ENCODE measurements at regions of chr6 and their contacts with region 1.

Region 1: DNA sequence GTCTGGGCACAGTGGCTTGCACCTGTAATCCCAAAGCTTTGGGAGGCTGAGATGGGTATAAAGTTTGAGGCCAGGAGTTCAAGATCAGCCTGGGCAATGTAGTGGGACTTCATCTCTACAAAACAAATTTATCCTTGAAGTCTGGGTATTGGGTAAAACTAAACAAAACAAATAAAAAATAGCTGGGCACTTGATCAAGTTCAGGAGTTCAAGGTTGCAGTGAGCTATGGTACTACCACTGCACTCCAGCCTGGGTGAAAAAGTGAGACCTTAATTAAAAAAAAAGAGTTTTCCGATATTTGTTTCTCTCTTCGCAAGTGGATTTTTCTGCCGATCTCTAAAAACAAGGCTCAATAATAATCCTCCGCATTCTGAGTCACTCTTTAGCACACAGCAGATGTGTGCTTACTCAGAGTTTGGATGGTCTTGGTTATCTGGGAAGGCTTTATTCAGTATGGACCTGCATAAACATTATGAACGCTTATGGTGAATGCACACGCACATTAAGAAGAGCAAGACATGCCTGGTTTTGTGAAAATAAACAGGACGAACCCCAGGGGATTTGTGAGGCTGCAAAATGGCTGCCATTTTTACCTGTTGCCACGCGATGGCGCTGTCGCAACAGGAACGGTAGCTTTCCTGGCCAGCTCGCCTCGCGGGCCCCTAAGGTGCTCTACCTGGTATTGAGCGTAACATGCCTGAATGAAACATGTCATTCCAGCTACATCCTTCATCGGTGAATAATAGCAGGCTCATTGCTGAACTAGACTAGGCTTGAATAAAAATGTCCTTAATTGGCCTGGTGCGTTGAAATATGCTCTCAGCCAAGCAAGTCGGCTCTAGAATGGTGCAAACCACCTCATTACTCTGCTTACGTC is 6.0 kb downstream of the OPN5 start:
- DNase-seq: no peak
- ATAC-seq: peak; percentile 96
- H3K4me3 ChIP-seq: no peak overlapping the region
- H3K27ac ChIP-seq: no peak overlapping the region
- H3K4me1 ChIP-seq: no peaks in the 10 kb centered on the region
- H3K27me3 ChIP-seq: peaks cover 0 to 2% of the 10 kb centered on the region in 2 experiments; a peak in 1 of 4 replicates
- CTCF ChIP-seq: peak; percentile 88 to 94 (median 93); a peak in 5 of 6 replicates
- EP300 ChIP-seq: no peak
- POLR2A ChIP-seq: no peak
- RAD21 ChIP-seq: peak; percentile 92

Region 2: DNA sequence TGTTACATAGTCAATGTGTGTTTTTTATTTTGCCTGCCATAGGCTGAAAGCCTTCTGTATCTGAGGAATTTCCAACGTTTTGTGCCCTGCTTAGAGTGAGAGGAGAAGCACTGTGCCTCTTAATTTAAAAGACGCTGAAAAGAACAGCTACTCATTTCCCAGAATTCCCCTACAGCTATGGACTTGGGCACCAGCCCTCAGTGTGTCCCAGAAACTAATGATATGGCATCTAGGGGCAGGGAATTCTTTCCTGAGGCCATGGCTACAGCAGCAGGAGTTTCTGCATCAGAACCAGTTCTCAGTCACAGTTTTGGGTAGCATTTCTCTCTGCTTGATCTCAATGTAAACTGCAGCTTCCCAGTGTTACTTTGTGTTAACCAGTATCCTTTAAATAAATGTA is 14.1 kb after region 1 on chr6:
- CTCF ChIA-PET with region 1: interaction called, 15 read pairs
- POLR2A ChIA-PET with region 1: no interaction called
- RAD21 ChIA-PET with region 1: interaction called, 3 read pairs
- SMC1A ChIA-PET with region 1: interaction called, 12 read pairs
- in situ Hi-C with region 1: no loop called
- intact Hi-C with region 1: no loop called
- DNase-seq: no peak
- ATAC-seq: no peak
- H3K4me3 ChIP-seq: no peak overlapping the region
- H3K27ac ChIP-seq: no peak overlapping the region
- H3K4me1 ChIP-seq: no peaks in the 10 kb centered on the region
- H3K27me3 ChIP-seq: no peaks in the 10 kb centered on the region
- CTCF ChIP-seq: no peak
- EP300 ChIP-seq: no peak
- POLR2A ChIP-seq: no peak
- RAD21 ChIP-seq: no peak

Region 3: GRCh38 chr6:47844881-47845280 is 57.0 kb after region 1 on chr6:
- CTCF ChIA-PET with region 1: no interaction called
- POLR2A ChIA-PET with region 1: no interaction called
- RAD21 ChIA-PET with region 1: no interaction called
- SMC1A ChIA-PET with region 1: no interaction called
- in situ Hi-C with region 1: no loop called
- intact Hi-C with region 1: no loop called
- DNase-seq: no peak
- ATAC-seq: no peak
- H3K4me3 ChIP-seq: no peak overlapping the region
- H3K27ac ChIP-seq: no peak overlapping the region
- H3K4me1 ChIP-seq: no peaks in the 10 kb centered on the region
- H3K27me3 ChIP-seq: peaks cover 0 to 4% of the 10 kb centered on the region in 2 experiments; a peak in 1 of 4 replicates
- CTCF ChIP-seq: no peak
- EP300 ChIP-seq: no peak
- POLR2A ChIP-seq: no peak
- RAD21 ChIP-seq: no peak

Region 4: GRCh38 chr6:48765352-48765961 is 977.6 kb after region 1 on chr6:
- CTCF ChIA-PET with region 1: interaction called, 34 read pairs
- POLR2A ChIA-PET with region 1: no interaction called
- RAD21 ChIA-PET with region 1: interaction called, 14 read pairs
- SMC1A ChIA-PET with region 1: interaction called, 13 read pairs
- in situ Hi-C with region 1: loop called (anchors 10 kb)
- intact Hi-C with region 1: loop called (anchors 1 kb)
- DNase-seq: no peak
- ATAC-seq: peak; percentile 73
- H3K4me3 ChIP-seq: no peak overlapping the region
- H3K27ac ChIP-seq: no peak overlapping the region
- H3K4me1 ChIP-seq: no peaks in the 10 kb centered on the region
- H3K27me3 ChIP-seq: no peaks in the 10 kb centered on the region
- CTCF ChIP-seq: peak; percentile 16 to 42 (median 34); a peak in 4 of 6 replicates
- EP300 ChIP-seq: no peak
- POLR2A ChIP-seq: no peak
- RAD21 ChIP-seq: peak; percentile 67

Region 5: DNA sequence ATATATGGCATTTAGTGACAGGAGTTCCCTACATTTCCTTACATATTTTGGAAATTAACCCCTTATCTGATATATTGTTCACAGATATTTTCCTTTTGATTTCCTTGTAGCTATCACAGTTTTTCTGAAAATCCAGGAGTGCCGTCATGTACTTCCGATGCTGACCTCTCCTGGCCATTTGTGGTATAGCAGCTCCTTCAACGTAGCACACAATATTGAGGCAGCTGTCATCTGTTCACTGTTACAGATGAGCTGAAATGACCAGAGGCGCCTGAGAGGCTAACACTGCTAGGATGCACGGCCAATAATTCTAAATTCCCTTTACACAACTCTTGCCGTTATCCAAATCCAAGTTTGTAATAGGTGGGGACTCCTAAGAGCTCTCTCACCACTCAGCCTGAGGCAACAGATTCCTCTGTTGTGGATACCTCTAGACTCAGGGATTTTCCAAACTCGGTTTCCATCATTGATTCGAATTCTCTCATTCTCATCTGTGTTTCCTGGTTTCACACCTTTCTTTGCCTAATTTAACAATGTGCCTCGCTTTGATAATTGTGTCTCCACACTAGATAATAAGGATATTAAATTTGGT is 1622.2 kb after region 1 on chr6:
- CTCF ChIA-PET with region 1: interaction called, 57 read pairs
- POLR2A ChIA-PET with region 1: no interaction called
- RAD21 ChIA-PET with region 1: interaction called, 24 read pairs
- SMC1A ChIA-PET with region 1: interaction called, 16 read pairs
- in situ Hi-C with region 1: loop called (anchors 5 kb)
- intact Hi-C with region 1: loop called (anchors 1 kb)
- DNase-seq: peak; percentile 8
- ATAC-seq: peak; percentile 91
- H3K4me3 ChIP-seq: no peak overlapping the region
- H3K27ac ChIP-seq: no peak overlapping the region
- H3K4me1 ChIP-seq: no peaks in the 10 kb centered on the region
- H3K27me3 ChIP-seq: no peaks in the 10 kb centered on the region
- CTCF ChIP-seq: peak; percentile 68 to 85 (median 81)
- EP300 ChIP-seq: no peak
- POLR2A ChIP-seq: no peak
- RAD21 ChIP-seq: peak; percentile 59

Measured in GM12878 (cell line).